ENCODE measurements at regions of chr6 and their contacts with region 1.

Region 1: GRCh38 chr6:167907837-167908681 is 81.3 kb downstream of the AFDN start:
- DNase-seq: peak; percentile 18
- H3K4me3 ChIP-seq: no peak overlapping the region
- H3K27ac ChIP-seq: no peak overlapping the region
- H3K4me1 ChIP-seq: peaks cover 9% of the 10 kb centered on the region
- H3K27me3 ChIP-seq: no peaks in the 10 kb centered on the region
- CTCF ChIP-seq: peak; percentile 71

Region 2: GRCh38 chr6:167238146-167238693 is 669.8 kb before region 1 on chr6:
- CTCF ChIA-PET with region 1: no interaction called
- POLR2A ChIA-PET with region 1: no interaction called
- intact Hi-C with region 1: no loop called
- DNase-seq: no peak
- H3K4me3 ChIP-seq: no peak overlapping the region
- H3K27ac ChIP-seq: no peak overlapping the region
- H3K4me1 ChIP-seq: no peaks in the 10 kb centered on the region
- H3K27me3 ChIP-seq: peaks cover 11% of the 10 kb centered on the region
- CTCF ChIP-seq: no peak

Region 3: GRCh38 chr6:168050881-168051586 is 143.0 kb after region 1 on chr6:
- CTCF ChIA-PET with region 1: no interaction called
- POLR2A ChIA-PET with region 1: no interaction called
- intact Hi-C with region 1: loop called (anchors 10 kb)
- DNase-seq: peak; percentile 37
- H3K4me3 ChIP-seq: no peak overlapping the region
- H3K27ac ChIP-seq: no peak overlapping the region
- H3K4me1 ChIP-seq: no peaks in the 10 kb centered on the region
- H3K27me3 ChIP-seq: no peaks in the 10 kb centered on the region
- CTCF ChIP-seq: peak; percentile 55

Region 4: DNA sequence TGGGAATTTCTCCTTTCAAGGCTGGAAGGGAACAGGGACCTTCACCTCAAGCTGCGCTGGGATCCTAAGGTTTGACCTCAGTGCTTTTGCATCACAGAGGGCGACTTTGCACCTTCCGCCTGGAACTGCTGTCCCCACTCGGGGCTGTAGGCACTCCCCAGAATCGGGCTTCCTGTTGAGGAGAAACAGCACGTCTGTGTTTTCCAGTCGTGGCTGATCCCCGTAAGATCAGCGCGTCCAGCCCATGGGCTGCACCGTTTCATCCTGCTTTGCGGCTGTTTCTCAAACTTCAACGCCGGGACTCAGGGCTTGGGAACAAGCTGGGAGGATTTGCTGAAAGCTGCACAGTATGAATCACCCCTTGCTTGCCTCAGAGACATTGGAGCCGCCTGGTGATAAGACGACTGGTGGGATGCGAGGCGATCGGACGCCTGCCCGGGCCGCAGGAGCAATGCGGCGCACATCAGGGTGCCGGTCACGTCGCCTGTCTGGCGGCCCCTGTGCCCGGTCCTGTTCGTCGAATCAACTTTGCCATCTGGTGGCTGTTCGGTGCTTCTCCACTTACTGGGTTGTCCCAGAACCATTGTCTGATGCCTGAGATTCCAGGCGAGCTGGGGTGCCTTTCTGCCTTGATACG is 224.6 kb after region 1 on chr6:
- CTCF ChIA-PET with region 1: no interaction called
- POLR2A ChIA-PET with region 1: no interaction called
- intact Hi-C with region 1: loop called (anchors 5 kb)
- DNase-seq: peak; percentile 53
- H3K4me3 ChIP-seq: no peak overlapping the region
- H3K27ac ChIP-seq: no peak overlapping the region
- H3K4me1 ChIP-seq: no peaks in the 10 kb centered on the region
- H3K27me3 ChIP-seq: no peaks in the 10 kb centered on the region
- CTCF ChIP-seq: peak; percentile 55

Region 5: GRCh38 chr6:168355716-168356449 is 447.8 kb after region 1 on chr6:
- CTCF ChIA-PET with region 1: interaction called, 3 read pairs
- POLR2A ChIA-PET with region 1: no interaction called
- intact Hi-C with region 1: loop called (anchors 2 kb)
- DNase-seq: peak; percentile 84
- H3K4me3 ChIP-seq: no peak overlapping the region
- H3K27ac ChIP-seq: no peak overlapping the region
- H3K4me1 ChIP-seq: peaks cover 4% of the 10 kb centered on the region
- H3K27me3 ChIP-seq: no peaks in the 10 kb centered on the region
- CTCF ChIP-seq: peak; percentile 87

Measured in A673 (cell line).